ENCODE measurements at regions of chr20 and their contacts with region 1.

Region 1: DNA sequence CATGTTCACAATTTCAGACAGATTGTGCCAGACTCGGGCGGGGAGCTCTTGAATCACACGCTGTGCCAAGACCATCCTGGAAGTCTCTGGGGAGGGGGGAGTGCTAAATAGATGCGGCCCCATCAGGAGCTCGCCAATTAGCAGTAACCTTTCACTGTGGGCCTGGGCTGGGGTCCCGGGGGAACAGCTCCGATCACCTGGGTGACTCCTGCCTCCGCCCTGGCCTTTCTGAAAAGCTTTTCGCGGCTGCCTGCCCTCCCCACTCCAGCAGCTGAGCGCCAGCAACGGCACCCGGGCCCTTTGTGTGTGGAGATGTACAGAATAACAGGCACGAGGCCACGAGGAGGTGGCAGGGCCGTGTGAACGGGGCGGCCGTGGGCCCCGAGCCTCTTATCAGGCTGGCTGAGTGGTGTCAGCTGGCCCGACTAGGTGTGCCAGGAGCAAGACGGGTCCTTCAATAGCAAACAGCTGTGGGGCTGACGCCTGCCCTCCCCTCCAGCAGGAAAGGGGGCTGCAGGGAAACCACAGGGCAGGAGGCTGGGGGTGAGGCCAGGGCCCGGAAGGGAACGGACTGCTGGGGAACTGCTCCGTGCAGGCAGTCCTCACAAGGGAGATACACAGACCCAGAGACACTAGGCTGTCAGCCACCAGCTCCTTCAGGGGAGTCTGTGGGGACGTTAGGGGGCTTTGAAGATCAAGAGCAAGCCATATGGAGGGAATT is 56.8 kb downstream of the NOL4L start:
- DNase-seq: no peak
- H3K4me3 ChIP-seq: no peak overlapping the region
- CTCF ChIP-seq: no peak

Region 2: DNA sequence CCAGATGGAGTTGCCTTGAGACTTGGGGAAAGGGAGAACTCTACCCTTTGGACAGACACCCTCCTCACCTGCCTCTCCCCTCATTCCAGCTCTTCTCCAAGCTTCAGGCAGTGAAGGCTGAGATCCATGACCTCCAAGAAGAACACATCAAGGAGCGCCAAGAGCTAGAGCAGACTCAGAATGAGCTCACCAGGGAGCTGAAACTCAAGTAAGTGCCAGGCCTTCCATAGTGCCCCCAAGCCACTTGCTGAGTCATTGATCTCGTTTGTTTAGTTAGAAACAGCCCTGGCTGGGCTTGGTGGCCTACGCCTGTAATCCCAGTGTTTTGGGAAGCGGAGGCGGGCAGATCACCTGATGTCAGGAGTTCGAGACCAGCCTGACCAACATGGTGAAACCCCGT is 211.7 kb before region 1 on chr20:
- CTCF ChIA-PET with region 1: no interaction called
- POLR2A ChIA-PET with region 1: no interaction called
- DNase-seq: no peak
- H3K4me3 ChIP-seq: no peak overlapping the region
- CTCF ChIP-seq: no peak

Region 3: DNA sequence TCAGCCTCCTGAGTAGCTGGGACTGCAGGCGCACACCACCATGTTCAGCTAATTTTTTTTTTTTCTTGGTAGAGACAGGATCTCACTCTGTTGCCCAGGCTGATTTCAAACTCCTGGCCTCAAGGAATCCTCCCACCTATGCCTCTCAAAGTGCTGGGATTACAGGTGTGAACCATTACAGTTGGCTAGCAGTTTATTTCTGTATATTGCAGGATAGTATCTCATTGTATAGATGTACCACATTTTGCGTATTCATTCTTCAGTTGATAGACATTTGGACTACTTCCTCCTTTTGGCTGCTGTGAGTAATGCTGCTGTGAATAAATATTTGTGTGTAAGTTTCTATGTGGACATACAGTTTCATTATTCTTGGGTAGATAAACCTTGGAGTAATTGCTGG is 137.3 kb before region 1 on chr20:
- CTCF ChIA-PET with region 1: no interaction called
- POLR2A ChIA-PET with region 1: no interaction called
- DNase-seq: no peak
- H3K4me3 ChIP-seq: no peak overlapping the region
- CTCF ChIP-seq: no peak

Region 4: GRCh38 chr20:32516583-32517517 is 11.5 kb before region 1 on chr20:
- CTCF ChIA-PET with region 1: interaction called, 53 read pairs
- POLR2A ChIA-PET with region 1: no interaction called
- DNase-seq: no peak
- H3K4me3 ChIP-seq: no peak overlapping the region
- CTCF ChIP-seq: no peak

Region 5: GRCh38 chr20:32737371-32738223 is 209.3 kb after region 1 on chr20:
- CTCF ChIA-PET with region 1: no interaction called
- POLR2A ChIA-PET with region 1: no interaction called
- DNase-seq: peak; percentile 60
- H3K4me3 ChIP-seq: no peak overlapping the region; the same call in 1 of the 2 replicates
- CTCF ChIP-seq: no peak